ENCODE measurements at regions of chr5 and their contacts with region 1.

Region 1: DNA sequence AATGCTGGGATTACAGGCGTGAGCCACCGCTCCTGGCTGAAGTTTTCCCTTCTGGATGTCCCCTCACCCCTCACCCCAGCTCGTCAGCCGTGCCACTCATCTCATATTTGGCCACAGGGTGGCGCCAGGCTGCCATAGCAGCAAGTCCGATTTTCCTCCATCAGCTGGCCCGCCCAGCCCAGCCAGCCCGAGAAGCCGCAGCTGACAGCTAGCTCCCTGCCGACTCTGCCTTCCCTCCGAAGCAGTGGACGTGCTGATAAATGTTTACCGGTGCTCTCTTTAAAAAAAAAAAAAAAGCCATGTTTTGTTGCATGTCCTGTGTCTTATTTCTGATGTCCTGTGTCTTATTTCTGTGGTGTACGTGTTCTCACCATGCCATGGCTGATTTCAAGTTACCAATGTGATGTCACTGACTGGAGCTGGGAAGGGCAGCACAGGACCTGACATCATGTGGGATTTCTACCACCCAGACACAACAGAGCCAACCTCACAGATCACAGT is 58.3 kb downstream of the PFDN1 start:
- DNase-seq: peak; percentile 77 to 82
- H3K4me3 ChIP-seq: no peak overlapping the region
- H3K27ac ChIP-seq: no peak overlapping the region
- H3K4me1 ChIP-seq: peaks cover 45% of the 10 kb centered on the region
- H3K27me3 ChIP-seq: no peaks in the 10 kb centered on the region
- CTCF ChIP-seq: peak; percentile 91

Region 2: DNA sequence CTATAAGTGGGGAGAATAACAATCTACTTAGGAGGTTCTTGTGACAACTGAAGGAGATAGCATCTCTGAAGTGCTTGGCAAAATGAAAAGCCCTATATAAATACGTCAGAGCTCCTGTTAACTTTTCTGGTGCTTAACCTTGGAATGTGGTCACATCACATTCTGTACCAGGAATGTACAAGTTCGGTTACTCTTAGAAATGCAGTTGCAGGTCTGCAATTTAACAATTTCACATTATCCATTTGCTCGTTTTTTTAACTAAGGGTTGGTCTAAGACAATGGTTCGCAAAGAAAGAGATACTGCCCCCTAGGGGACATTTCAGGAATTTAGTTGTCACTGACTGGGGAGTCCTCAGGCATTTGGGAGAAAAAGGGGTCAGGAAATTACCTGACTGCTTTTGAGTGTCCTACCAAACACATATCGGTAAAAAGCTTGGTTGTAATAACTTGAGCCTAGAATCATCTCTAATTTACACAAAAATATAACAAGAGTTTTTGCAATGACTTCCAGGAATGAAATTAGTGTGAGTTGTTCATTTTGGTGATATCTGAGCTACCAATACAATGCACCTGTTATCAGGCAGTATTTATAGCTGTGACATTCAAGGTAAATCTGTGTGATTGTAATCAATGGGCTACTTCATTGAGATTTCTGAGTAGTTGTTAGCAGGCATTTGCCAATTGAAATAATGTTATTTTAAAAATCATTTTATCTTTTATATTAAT is 107.2 kb after region 1 on chr5:
- CTCF ChIA-PET with region 1: interaction called, 34 read pairs
- POLR2A ChIA-PET with region 1: no interaction called
- intact Hi-C with region 1: loop called (anchors 1 kb)
- DNase-seq: peak; percentile 54 to 76
- H3K4me3 ChIP-seq: no peak overlapping the region
- H3K27ac ChIP-seq: no peak overlapping the region
- H3K4me1 ChIP-seq: peaks cover 49% of the 10 kb centered on the region
- H3K27me3 ChIP-seq: no peaks in the 10 kb centered on the region
- CTCF ChIP-seq: peak; percentile 96

Region 3: DNA sequence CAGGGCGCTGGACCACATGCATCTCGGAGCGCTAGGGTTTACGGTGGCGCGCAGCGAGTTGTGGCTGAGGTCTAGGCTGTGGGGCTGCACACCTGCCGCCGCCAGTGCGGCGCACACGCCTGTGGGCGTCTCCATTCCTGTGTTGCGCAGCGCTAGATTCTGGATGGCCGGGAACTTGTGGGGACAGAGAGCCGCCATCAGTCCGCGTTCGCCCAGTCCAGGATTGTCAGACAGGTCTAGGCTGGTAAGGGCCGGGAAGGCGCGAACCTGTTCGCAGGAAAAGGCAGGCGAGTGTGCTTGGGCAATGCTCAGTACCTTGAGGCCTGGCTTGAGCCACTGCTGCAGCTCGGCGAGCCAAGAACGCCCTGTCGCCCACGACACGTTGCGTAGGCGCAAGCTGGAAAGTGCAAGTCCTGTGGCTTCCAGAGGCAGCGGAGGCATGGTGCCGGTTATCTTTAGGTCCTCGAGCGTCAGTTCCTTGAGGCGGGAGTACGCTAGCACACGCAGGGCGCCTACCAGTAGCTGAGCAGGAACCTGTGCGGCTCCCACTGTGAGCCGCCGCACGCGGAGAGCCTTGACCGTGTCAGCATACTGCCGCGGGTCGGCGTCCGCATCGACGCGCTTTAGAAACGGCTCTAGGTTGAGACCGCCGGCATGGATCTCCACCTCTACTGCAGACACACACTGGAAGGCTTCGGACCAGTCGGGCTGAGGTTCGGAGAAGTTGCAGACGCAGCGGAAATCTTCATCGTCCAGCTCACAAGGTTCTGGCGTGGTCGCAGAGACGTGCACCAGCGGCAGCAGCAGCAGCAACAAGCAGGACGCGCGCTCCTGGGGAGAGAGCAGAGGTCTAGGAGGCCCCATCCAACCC is 387.8 kb after region 1 on chr5:
- CTCF ChIA-PET with region 1: no interaction called
- POLR2A ChIA-PET with region 1: no interaction called
- intact Hi-C with region 1: loop called (anchors 5 kb)
- DNase-seq: peak in 1 of 2 experiments; percentile 32
- H3K4me3 ChIP-seq: peak overlapping the region; percentile 31; the same call in 1 of the 2 replicates
- H3K27ac ChIP-seq: no peak overlapping the region
- H3K4me1 ChIP-seq: peaks cover 6% of the 10 kb centered on the region; the same call in 1 of the 2 replicates
- H3K27me3 ChIP-seq: no peaks in the 10 kb centered on the region
- CTCF ChIP-seq: no peak

Region 4: GRCh38 chr5:140882591-140882899 is 638.0 kb after region 1 on chr5:
- CTCF ChIA-PET with region 1: no interaction called
- POLR2A ChIA-PET with region 1: no interaction called
- intact Hi-C with region 1: no loop called
- DNase-seq: no peak
- H3K4me3 ChIP-seq: no peak overlapping the region
- H3K27ac ChIP-seq: no peak overlapping the region
- H3K4me1 ChIP-seq: no peaks in the 10 kb centered on the region
- H3K27me3 ChIP-seq: 0 out of 2 replicates have a peak, but pooled peaks cover under 1% of the 10 kb centered on the region
- CTCF ChIP-seq: 0 out of 2 replicates have a peak, but pooled peaks have one; percentile 26

Measured in PC-9 (cell line).